ENCODE measurements at regions of chr6 and their contacts with region 1.

Region 1: DNA sequence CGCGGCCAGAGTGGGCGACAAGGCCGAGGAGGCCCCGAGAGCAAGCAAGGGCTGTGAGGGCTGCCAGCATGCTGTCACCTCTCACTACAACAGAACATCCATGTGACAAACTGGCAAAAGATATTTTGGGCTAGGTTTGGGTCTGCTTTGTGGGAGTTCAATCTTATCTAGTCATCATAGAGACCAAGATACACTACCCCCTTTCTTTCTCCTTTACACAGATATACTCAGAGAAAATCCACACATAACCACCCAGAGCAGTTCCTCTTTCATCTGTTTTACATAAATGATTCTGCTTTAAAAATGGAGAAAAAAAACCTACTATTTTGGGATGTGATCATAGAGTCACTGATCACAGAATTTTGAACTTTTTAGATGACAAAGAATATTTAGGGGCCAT is 16.8 kb downstream of the SOX4 start:
- DNase-seq: no peak
- H3K4me3 ChIP-seq: no peak overlapping the region
- H3K27ac ChIP-seq: no peak overlapping the region
- H3K4me1 ChIP-seq: peaks cover 4% of the 10 kb centered on the region
- H3K27me3 ChIP-seq: no peaks in the 10 kb centered on the region
- CTCF ChIP-seq: no peak

Region 2: GRCh38 chr6:23446394-23447046 is 1836.2 kb after region 1 on chr6:
- CTCF ChIA-PET with region 1: interaction called, 11 read pairs
- POLR2A ChIA-PET with region 1: interaction called, 3 read pairs
- intact Hi-C with region 1: no loop called
- DNase-seq: peak in 1 of 2 experiments; percentile 3
- H3K4me3 ChIP-seq: no peak overlapping the region
- H3K27ac ChIP-seq: no peak overlapping the region
- H3K4me1 ChIP-seq: no peaks in the 10 kb centered on the region
- H3K27me3 ChIP-seq: no peaks in the 10 kb centered on the region
- CTCF ChIP-seq: peak; percentile 57; the same call in 1 of the 2 replicates

Measured in PC-9 (cell line).